Activated CD4-positive, alpha-beta memory T cell treated with anti-CD3 and anti-CD28 coated beads, Interleukin-2, amount 10 ng/mL, durations not matched to agents 7 days and 5 days (primary cell): ENCODE measurements at regions of chr10 and their contacts with region 1.

Region 1: DNA sequence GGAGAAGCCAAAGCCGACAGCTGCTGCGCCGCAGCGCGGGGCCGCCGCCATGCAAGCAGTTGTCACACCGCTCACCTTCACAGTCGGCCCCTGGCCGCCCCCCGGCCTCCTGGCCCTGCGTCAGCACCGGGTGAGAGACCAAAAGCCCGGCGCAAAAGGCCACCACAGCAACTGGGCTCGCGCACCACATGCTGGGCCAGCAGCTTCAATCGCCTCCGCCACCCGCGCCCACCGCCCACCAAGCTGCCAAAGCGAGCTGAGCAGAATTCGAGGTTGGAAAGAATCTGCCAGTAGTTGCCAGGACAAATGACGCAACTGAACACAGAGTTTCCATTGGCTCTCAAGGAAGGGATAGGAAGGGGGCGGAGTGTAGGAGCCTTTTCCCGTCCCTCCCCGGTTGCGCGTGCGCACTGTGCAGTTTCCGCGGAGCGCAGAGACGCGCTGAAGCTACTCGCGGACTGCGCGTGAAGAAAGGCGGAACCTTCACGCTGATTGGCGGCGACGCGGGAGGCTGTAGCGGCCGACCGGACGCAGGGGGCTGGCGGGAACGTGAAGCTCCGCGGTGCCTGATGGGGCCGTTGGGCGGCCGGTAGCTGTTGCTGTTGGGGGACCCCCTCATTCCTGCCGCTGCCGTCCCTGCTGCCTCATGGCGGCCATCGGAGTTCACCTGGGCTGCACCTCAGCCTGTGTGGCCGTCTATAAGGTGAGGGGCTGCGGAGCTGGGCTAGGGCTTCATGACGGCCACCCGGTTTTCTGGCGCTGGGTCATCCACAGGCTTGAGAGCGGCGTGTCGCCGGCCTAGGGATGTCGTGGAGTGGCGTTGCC is at the starts of genes CDNF, HSPA14 and MSANTD7:
- DNase-seq: peak; percentile 99
- H3K4me3 Mint-ChIP-seq: peak within 1 kb of the TSS; percentile 88
- H3K27ac Mint-ChIP-seq: peak within 1 kb of the TSS; percentile 82
- H3K4me1 Mint-ChIP-seq: peaks cover 24% of the 10 kb centered on the region
- H3K27me3 Mint-ChIP-seq: no peaks in the 10 kb centered on the region
- total RNA-seq, gene CDNF: 0.63 to 0.75 TPM
- total RNA-seq, gene HSPA14: 21.9 to 23.1 TPM
- total RNA-seq, gene MSANTD7: 15.5 to 18.7 TPM

Region 2: DNA sequence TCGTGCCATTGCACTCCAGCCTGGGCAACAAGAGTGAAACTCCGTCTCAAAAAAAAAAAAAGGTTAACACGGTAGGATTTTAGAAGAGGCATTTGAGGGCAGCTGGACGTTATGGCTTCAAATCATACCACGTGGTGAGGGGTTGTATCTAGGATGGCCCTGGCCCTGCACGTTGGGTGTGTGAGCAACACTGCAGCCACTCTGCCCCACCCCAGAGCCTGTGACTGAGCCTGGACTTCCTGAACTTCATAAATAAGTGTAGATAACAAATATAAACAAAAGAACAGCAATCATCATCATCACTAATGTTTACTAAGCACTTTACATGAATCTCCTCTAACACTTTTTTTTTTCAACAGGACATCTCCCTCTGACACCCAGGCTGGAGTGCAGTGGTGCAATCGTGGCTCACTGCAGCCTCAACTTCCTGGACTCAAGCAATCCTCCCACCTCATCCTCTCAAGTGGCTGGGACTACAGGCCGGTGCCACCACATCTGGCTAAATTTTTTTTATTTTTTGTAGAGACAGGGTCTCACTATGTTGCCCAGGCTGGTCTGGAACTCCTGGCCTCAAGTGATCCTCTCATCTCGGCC is 337.7 kb before region 1 on chr10:
- CTCF ChIA-PET with region 1: interaction called, 11 read pairs
- POLR2A ChIA-PET with region 1: no interaction called
- DNase-seq: no peak
- H3K4me3 Mint-ChIP-seq: no peak overlapping the region
- H3K27ac Mint-ChIP-seq: no peak overlapping the region
- H3K4me1 Mint-ChIP-seq: peaks cover 14% of the 10 kb centered on the region
- H3K27me3 Mint-ChIP-seq: peaks cover 3% of the 10 kb centered on the region

Region 3: DNA sequence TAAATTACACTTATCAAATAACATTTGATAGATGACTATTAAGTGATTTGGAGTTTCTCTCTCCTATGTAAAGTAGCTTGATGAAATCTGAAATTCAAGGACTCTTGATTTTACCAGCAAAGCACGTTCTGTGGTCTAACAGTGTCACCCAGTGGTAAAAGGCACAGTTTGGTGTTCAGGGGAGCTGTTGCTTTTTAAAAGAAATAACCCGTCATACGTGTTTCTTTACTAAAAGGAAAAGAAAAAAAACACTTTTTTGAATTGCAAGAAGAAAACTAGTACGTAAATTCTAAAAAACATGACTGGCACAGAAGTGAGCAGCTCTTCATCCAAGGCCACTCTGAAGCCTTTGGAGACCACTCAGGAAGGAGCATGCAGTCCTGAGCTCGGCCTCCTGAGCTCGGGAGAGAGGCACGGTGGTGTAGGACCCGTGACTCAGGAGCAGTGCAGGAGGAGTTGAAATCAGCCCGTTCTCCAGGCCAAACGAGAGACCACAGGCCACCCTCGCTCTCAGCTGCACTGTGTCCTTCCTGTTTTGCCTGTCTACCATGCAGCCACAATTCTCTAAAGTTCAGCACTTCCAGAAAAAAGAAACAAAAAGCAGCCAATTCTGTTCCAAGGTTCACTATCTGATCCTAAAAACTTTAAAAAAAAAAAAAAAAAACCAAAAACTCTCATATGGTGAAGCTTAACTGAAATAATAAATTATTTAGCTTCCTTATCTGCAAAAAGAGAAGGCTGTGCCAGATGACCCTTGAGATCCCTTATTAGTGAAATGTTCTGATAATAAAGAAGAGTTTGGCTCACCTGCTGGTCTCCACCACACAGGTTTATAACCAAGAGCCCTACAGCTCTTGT is 294.7 kb before region 1 on chr10:
- CTCF ChIA-PET with region 1: interaction called, 24 read pairs
- POLR2A ChIA-PET with region 1: interaction called, 11 read pairs
- DNase-seq: no peak
- H3K4me3 Mint-ChIP-seq: peak overlapping the region; percentile 14
- H3K27ac Mint-ChIP-seq: peak overlapping the region; percentile 54
- H3K4me1 Mint-ChIP-seq: peaks cover 77% of the 10 kb centered on the region
- H3K27me3 Mint-ChIP-seq: no peaks in the 10 kb centered on the region

Region 4: GRCh38 chr10:14578060-14578952 is 259.7 kb before region 1 on chr10:
- CTCF ChIA-PET with region 1: interaction called, 6 read pairs
- POLR2A ChIA-PET with region 1: interaction called, 14 read pairs
- DNase-seq: no peak
- H3K4me3 Mint-ChIP-seq: no peak overlapping the region
- H3K27ac Mint-ChIP-seq: no peak overlapping the region
- H3K4me1 Mint-ChIP-seq: peaks cover 81% of the 10 kb centered on the region
- H3K27me3 Mint-ChIP-seq: no peaks in the 10 kb centered on the region

Region 5: GRCh38 chr10:14648005-14648765 is 189.8 kb before region 1 on chr10:
- CTCF ChIA-PET with region 1: interaction called, 5 read pairs
- POLR2A ChIA-PET with region 1: interaction called, 13 read pairs
- DNase-seq: peak; percentile 79
- H3K4me3 Mint-ChIP-seq: peak overlapping the region; percentile 75
- H3K27ac Mint-ChIP-seq: peak overlapping the region; percentile 96
- H3K4me1 Mint-ChIP-seq: peaks cover 72% of the 10 kb centered on the region
- H3K27me3 Mint-ChIP-seq: no peaks in the 10 kb centered on the region

Region 6: DNA sequence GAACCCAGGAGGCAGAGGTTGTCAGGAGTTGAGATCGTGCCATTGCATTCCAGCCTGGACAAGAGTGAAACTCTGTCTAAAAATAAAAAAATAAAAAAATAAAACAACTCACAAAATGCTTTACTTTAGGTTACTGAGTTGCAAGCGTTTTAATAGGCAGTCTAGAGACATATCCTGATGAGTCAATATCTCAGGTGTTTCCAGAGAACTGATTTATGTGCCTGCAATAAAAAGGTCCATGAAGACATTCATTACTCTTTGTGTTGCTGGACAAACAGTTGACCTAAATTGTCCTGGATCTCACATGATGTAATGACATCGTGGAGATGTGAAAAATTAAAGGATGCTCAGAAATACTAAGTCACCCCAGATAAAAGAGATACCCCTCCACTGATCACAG is 31.7 kb before region 1 on chr10:
- CTCF ChIA-PET with region 1: no interaction called
- POLR2A ChIA-PET with region 1: no interaction called
- DNase-seq: no peak
- H3K4me3 Mint-ChIP-seq: no peak overlapping the region
- H3K27ac Mint-ChIP-seq: no peak overlapping the region
- H3K4me1 Mint-ChIP-seq: peaks cover under 1% of the 10 kb centered on the region
- H3K27me3 Mint-ChIP-seq: peaks cover 5% of the 10 kb centered on the region

Region 7: GRCh38 chr10:14954001-14954770 is 116.2 kb after region 1 on chr10 and contains the start of gene DCLRE1C:
- CTCF ChIA-PET with region 1: interaction called, 6 read pairs
- POLR2A ChIA-PET with region 1: interaction called, 33 read pairs
- DNase-seq: peak; percentile 93
- H3K4me3 Mint-ChIP-seq: peak within 1 kb of the TSS; percentile 87
- H3K27ac Mint-ChIP-seq: peak within 1 kb of the TSS; percentile 93
- H3K4me1 Mint-ChIP-seq: peaks cover 64% of the 10 kb centered on the region
- H3K27me3 Mint-ChIP-seq: no peaks in the 10 kb centered on the region
- total RNA-seq, gene DCLRE1C: 36.8 to 40.4 TPM